ENCODE measurements at regions of chr11 and their contacts with region 1.

Region 1: GRCh38 chr11:65013692-65014145 is 241 bp upstream of the ARL2 start:
- DNase-seq: peak; percentile 69
- ATAC-seq: peak; percentile 89
- H3K4me3 ChIP-seq: peak overlapping the region; percentile 76
- H3K27ac ChIP-seq: peak overlapping the region; percentile 88
- H3K4me1 ChIP-seq: peaks cover 17% of the 10 kb centered on the region
- H3K27me3 ChIP-seq: no peaks in the 10 kb centered on the region
- CTCF ChIP-seq: peak in 2 of 3 experiments; percentile 51 to 60; a peak in 4 of 6 replicates
- EP300 ChIP-seq: no peak; a peak in 1 of 4 replicates
- POLR2A ChIP-seq: peak; percentile 72
- RAD21 ChIP-seq: peak; percentile 38; the same call in 1 of the 2 replicates

Region 2: DNA sequence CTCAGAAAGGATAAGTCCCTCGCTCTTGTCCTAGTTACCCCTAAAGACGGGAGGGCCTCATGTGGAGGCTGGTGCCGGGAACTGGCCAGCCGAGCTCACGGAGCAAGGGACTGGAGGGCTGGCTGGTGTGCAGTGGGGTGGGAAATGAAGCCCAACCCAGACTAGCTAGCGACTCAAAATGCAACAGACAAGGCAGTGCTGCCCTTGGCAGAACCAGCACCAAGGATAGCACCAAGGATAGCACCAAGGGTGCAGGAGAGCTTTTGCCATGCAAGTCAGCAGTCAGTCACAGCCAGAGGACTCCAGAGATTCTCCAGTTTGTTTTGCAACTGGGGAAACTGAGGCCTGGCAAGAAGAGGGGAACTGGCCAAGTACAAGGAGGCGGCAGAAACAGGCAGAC is 10.4 kb before region 1 on chr11:
- CTCF ChIA-PET with region 1: interaction called, 25 read pairs
- POLR2A ChIA-PET with region 1: no interaction called
- RAD21 ChIA-PET with region 1: interaction called, 3 read pairs
- SMC1A ChIA-PET with region 1: interaction called, 6 read pairs
- in situ Hi-C with region 1: no loop called
- intact Hi-C with region 1: no loop called
- DNase-seq: no peak
- ATAC-seq: peak; percentile 27; the same call in 1 of the 3 replicates
- H3K4me3 ChIP-seq: no peak overlapping the region
- H3K27ac ChIP-seq: no peak overlapping the region
- H3K4me1 ChIP-seq: no peaks in the 10 kb centered on the region
- H3K27me3 ChIP-seq: no peaks in the 10 kb centered on the region
- CTCF ChIP-seq: no peak
- EP300 ChIP-seq: no peak
- POLR2A ChIP-seq: no peak
- RAD21 ChIP-seq: no peak

Region 3: GRCh38 chr11:65078151-65078550 is 64.4 kb after region 1 on chr11:
- CTCF ChIA-PET with region 1: interaction called, 9 read pairs
- POLR2A ChIA-PET with region 1: interaction called, 4 read pairs
- RAD21 ChIA-PET with region 1: interaction called, 6 read pairs
- SMC1A ChIA-PET with region 1: interaction called, 4 read pairs
- in situ Hi-C with region 1: no loop called
- intact Hi-C with region 1: loop called (anchors 1 kb)
- DNase-seq: no peak
- ATAC-seq: peak; percentile 90
- H3K4me3 ChIP-seq: peak overlapping the region; percentile 59
- H3K27ac ChIP-seq: peak overlapping the region; percentile 66
- H3K4me1 ChIP-seq: peaks cover 31% of the 10 kb centered on the region
- H3K27me3 ChIP-seq: no peaks in the 10 kb centered on the region
- CTCF ChIP-seq: peak; percentile 83 to 91 (median 87)
- EP300 ChIP-seq: no peak
- POLR2A ChIP-seq: peak; percentile 44; the same call in 1 of the 2 replicates
- RAD21 ChIP-seq: peak; percentile 70

Region 4: DNA sequence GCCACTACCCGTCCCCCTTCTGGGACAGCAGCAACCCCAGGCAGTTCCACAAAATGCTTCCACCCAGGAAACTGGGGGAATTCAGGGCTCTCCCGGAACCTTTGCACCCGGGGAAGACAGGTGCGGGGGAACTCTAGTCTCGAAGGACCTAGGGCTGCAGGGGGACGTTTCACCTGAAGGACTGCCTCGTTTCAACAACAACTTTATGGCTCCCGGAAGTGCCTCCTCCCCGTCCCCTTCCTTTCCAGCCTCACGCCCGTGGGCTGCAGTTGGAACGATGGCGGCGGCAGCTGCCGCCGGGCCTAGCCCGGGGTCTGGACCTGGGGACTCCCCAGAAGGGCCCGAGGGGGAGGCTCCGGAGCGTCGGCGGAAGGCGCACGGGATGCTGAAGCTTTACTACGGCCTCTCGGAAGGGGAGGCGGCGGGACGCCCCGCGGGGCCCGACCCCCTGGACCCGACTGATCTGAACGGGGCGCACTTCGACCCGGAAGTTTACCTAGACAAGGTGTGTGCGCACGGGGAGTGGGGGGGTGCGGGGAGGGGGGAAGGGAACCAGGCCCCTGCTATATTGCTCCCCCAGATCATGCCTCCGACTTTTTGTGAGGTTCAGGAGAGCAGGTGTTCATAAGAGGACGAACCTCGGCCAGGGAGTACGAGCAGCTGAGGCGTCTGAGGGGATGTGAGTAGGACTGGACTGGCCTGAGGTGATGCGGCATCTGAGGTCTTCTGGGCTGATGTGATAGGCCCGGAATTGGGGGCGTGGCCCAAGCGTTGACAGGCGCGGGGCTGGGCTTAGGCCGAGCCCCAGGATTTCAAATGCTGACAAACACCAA is 82.5 kb after region 1 on chr11 and contains the start of gene VPS51:
- CTCF ChIA-PET with region 1: interaction called, 38 read pairs
- POLR2A ChIA-PET with region 1: interaction called, 5 read pairs
- RAD21 ChIA-PET with region 1: interaction called, 4 read pairs
- SMC1A ChIA-PET with region 1: interaction called, 5 read pairs
- in situ Hi-C with region 1: no loop called
- intact Hi-C with region 1: loop called (anchors 5 kb)
- DNase-seq: peak; percentile 51
- ATAC-seq: peak; percentile 99
- H3K4me3 ChIP-seq: peak within 1 kb of the TSS; percentile 96
- H3K27ac ChIP-seq: peak within 1 kb of the TSS; percentile 45
- H3K4me1 ChIP-seq: peaks cover 4% of the 10 kb centered on the region
- H3K27me3 ChIP-seq: no peaks in the 10 kb centered on the region
- CTCF ChIP-seq: no peak
- EP300 ChIP-seq: 0 out of 4 replicates have a peak, but pooled peaks of 1 of the 2 experiments have one; percentile 19
- POLR2A ChIP-seq: peak; percentile 99
- RAD21 ChIP-seq: peak; percentile 11; the same call in 1 of the 2 replicates
- polyA plus RNA-seq, gene VPS51: 1.5 to 8.6 TPM

Region 5: DNA sequence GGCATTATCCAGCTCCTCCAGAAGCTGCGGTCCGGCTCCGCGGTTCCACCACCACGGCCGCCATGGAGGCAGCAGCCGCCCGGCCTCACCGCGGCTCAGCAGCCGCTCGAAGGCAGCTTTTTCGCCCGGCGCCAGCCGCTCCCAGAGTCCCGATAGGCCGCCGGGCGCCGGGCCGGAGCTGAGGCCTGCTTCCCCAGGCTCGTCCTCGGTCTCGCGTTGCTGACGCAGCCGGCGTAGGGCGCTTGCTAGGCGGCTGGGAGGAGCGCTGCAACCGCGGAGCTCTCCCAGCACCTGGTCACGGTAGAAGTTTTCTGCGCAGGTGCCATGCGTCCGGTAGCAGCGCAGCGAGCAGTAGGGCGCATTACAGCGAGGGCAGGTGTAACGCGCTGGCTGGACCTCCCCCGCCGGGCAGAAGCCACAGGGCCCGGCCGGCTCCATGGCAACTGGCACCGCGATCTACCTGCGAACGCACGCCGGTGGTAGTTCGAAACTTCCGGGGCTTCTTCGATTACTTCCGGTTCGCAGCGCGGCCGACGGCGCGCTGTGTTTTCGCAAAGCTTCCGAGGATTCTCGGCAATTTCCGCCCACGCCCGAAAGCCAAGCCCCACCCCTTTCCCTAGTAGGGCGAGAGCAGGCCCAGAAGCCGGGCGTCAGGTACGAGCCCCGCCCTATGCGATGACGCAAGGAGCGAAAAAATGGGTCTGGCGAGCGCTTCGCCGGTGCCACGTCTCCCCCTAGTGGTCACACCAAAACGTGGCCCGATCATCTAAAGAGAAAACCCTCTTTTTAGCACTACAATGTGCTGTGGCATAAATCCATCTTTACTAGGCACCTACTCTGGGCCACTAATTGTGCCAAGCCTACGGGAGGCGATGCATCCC is 103.7 kb after region 1 on chr11 and contains the start of gene ZNHIT2:
- CTCF ChIA-PET with region 1: interaction called, 64 read pairs
- POLR2A ChIA-PET with region 1: interaction called, 7 read pairs
- RAD21 ChIA-PET with region 1: interaction called, 9 read pairs
- SMC1A ChIA-PET with region 1: interaction called, 10 read pairs
- in situ Hi-C with region 1: no loop called
- intact Hi-C with region 1: loop called (anchors 1 kb)
- DNase-seq: peak; percentile 97
- ATAC-seq: peak; percentile 75
- H3K4me3 ChIP-seq: peak within 1 kb of the TSS; percentile 76
- H3K27ac ChIP-seq: peak within 1 kb of the TSS; percentile 68
- H3K4me1 ChIP-seq: peaks cover 29% of the 10 kb centered on the region
- H3K27me3 ChIP-seq: no peaks in the 10 kb centered on the region
- CTCF ChIP-seq: peak; percentile 85 to 97 (median 93); a peak in 5 of 6 replicates
- EP300 ChIP-seq: no peak
- POLR2A ChIP-seq: peak; percentile 95
- RAD21 ChIP-seq: peak; percentile 78
- polyA plus RNA-seq, gene ZNHIT2: 0.40 TPM in 1 of 2 experiments, not detected in the other

Region 6: GRCh38 chr11:65251476-65251875 is 237.8 kb after region 1 on chr11:
- CTCF ChIA-PET with region 1: interaction called, 3 read pairs
- POLR2A ChIA-PET with region 1: no interaction called
- RAD21 ChIA-PET with region 1: no interaction called
- SMC1A ChIA-PET with region 1: no interaction called
- in situ Hi-C with region 1: no loop called
- intact Hi-C with region 1: loop called (anchors 10 kb)
- DNase-seq: no peak
- ATAC-seq: no peak
- H3K4me3 ChIP-seq: no peak overlapping the region
- H3K27ac ChIP-seq: no peak overlapping the region
- H3K4me1 ChIP-seq: no peaks in the 10 kb centered on the region
- H3K27me3 ChIP-seq: no peaks in the 10 kb centered on the region
- CTCF ChIP-seq: no peak
- EP300 ChIP-seq: no peak
- POLR2A ChIP-seq: no peak
- RAD21 ChIP-seq: no peak

Region 7: GRCh38 chr11:66081505-66081904 is 1067.8 kb after region 1 on chr11:
- CTCF ChIA-PET with region 1: no interaction called
- POLR2A ChIA-PET with region 1: no interaction called
- RAD21 ChIA-PET with region 1: no interaction called
- SMC1A ChIA-PET with region 1: no interaction called
- in situ Hi-C with region 1: no loop called
- intact Hi-C with region 1: no loop called
- DNase-seq: no peak
- ATAC-seq: peak; percentile 93
- H3K4me3 ChIP-seq: peak overlapping the region; percentile 8; the same call in 1 of the 2 replicates
- H3K27ac ChIP-seq: peak overlapping the region; percentile 60
- H3K4me1 ChIP-seq: peaks cover 31% of the 10 kb centered on the region
- H3K27me3 ChIP-seq: no peaks in the 10 kb centered on the region
- CTCF ChIP-seq: no peak
- EP300 ChIP-seq: no peak
- POLR2A ChIP-seq: no peak
- RAD21 ChIP-seq: no peak

Measured in GM12878 (cell line).